Breast epithelium (tissue), 4 donors: ENCODE measurements at regions of chr1 and their contacts with region 1.

Region 1: GRCh38 chr1:239084459-239085080 is 301.8 kb upstream of the CHRM3 start:
- DNase-seq: no peak
- H3K4me3 ChIP-seq: no peak overlapping the region
- H3K27ac ChIP-seq: no peak overlapping the region
- H3K4me1 ChIP-seq: no peaks in the 10 kb centered on the region
- H3K27me3 ChIP-seq: no peaks in the 10 kb centered on the region
- CTCF ChIP-seq: no peak
- POLR2A ChIP-seq: no peak

Region 2: DNA sequence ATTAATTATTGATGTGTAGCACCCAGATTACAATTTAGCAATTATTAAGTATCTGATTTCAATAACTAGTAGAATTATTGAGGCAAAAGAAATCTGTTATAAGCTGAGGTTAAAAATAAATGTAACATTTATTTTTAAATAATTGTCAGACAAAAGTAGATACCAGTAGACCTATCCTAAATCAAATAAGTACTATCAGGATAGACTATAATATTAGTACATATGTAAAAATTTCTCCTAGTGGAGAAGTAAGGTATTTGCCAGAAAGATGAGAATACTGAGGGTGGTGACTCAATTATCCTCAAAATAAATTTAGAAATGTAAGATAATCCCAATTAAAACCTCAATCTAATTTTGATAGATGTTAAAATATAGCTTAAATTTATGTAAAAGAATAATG is 76.0 kb before region 1 on chr1:
- intact Hi-C with region 1: no loop called
- DNase-seq: no peak
- H3K4me3 ChIP-seq: no peak overlapping the region
- H3K27ac ChIP-seq: no peak overlapping the region
- H3K4me1 ChIP-seq: no peaks in the 10 kb centered on the region
- H3K27me3 ChIP-seq: no peaks in the 10 kb centered on the region
- CTCF ChIP-seq: no peak
- POLR2A ChIP-seq: no peak

Region 3: GRCh38 chr1:239040523-239040922 is 44.0 kb before region 1 on chr1:
- intact Hi-C with region 1: loop called (anchors 2 kb)
- DNase-seq: no peak
- H3K4me3 ChIP-seq: no peak overlapping the region
- H3K27ac ChIP-seq: no peak overlapping the region
- H3K4me1 ChIP-seq: no peaks in the 10 kb centered on the region
- H3K27me3 ChIP-seq: no peaks in the 10 kb centered on the region
- CTCF ChIP-seq: no peak
- POLR2A ChIP-seq: no peak

Region 4: GRCh38 chr1:240831191-240831631 is 1746.6 kb after region 1 on chr1:
- intact Hi-C with region 1: no loop called
- DNase-seq: no peak
- H3K4me3 ChIP-seq: no peak overlapping the region
- H3K27ac ChIP-seq: no peak overlapping the region
- H3K4me1 ChIP-seq: no peaks in the 10 kb centered on the region
- H3K27me3 ChIP-seq: no peaks in the 10 kb centered on the region
- CTCF ChIP-seq: no peak
- POLR2A ChIP-seq: no peak